HEK293 (cell line): ENCODE measurements at regions of chr15 and their contacts with region 1.

Region 1: DNA sequence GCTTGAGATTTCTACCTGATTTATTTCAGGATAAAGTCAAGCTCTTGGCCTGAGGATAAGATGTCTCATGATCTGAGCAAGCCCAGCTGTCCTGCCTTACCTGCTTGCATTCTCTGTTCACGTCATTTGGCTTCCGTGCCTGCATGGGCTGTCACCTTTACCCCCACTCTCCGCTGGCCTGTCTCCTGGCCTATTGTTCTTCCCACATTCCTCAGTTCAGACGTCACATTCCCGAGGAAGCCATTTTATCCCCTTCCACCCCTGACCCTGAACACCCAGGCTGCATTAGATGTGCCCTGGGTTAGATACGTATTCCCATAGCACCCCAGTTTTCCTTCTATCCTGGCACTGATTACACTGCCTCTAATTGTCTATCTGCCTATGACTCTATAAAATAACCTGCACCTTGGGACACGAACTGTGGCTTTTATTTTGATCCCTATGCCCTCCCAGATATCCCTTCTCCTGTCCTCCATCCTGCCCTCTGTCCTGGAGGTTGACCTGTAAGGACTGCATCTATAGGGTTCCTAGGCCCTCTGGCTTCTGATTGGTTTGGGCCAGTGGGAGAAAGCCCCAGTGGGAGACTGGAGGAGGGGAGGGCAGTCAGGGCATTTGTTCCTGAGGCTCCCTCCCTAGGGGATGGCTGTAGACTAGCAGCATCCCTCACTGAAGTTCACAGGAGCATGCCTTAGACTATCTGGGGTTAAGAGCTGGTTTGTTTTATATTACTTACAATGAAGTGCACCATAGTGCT is 19.2 kb upstream of the UBE2Q2 start:
- H3K4me3 ChIP-seq: no peak overlapping the region
- H3K27ac ChIP-seq: no peak overlapping the region
- H3K4me1 ChIP-seq: no peaks in the 10 kb centered on the region
- CTCF ChIP-seq: no peak

Region 2: DNA sequence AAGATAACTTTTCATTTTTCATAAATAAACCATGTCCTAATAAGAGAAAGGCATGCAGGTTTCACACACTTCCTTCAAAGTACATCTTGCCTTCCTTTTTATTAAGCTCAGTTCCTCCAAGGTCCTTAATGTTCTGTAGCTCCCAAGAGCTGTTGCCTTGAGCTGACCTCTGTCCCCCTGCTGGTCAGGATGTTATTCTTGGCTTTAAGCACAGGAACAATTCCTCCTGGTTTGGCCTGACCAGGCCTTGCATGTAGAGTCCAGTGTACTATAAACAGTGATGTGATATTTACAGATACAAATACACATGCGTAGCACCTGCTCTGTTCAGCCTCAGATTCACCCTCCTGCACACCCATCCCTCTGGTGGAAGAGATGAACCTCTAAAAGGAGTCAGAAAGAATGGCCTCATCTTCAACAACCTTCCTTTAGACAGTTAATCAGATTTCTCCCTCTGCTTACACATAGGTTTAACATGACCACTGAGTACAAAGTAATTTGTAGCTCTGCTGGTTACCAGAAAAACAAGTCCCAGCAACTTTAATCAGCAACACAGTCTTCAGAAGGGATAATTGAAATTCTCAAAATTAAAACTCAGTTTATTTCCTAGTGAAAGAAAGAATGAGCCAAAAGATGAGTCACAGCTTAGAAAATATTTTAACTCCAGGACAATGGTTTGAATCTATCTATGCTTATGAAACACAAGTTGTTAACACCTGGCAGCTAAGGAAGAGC is 291.5 kb before region 1 on chr15:
- CTCF ChIA-PET with region 1: no interaction called
- POLR2A ChIA-PET with region 1: no interaction called
- H3K4me3 ChIP-seq: no peak overlapping the region
- H3K27ac ChIP-seq: no peak overlapping the region
- H3K4me1 ChIP-seq: peaks cover 8% of the 10 kb centered on the region
- CTCF ChIP-seq: peak; percentile 65

Region 3: GRCh38 chr15:75597667-75598341 is 226.2 kb before region 1 on chr15:
- CTCF ChIA-PET with region 1: no interaction called
- POLR2A ChIA-PET with region 1: no interaction called
- H3K4me3 ChIP-seq: no peak overlapping the region
- H3K27ac ChIP-seq: no peak overlapping the region; the same call in 1 of the 2 replicates
- H3K4me1 ChIP-seq: no peaks in the 10 kb centered on the region
- CTCF ChIP-seq: no peak

Region 4: DNA sequence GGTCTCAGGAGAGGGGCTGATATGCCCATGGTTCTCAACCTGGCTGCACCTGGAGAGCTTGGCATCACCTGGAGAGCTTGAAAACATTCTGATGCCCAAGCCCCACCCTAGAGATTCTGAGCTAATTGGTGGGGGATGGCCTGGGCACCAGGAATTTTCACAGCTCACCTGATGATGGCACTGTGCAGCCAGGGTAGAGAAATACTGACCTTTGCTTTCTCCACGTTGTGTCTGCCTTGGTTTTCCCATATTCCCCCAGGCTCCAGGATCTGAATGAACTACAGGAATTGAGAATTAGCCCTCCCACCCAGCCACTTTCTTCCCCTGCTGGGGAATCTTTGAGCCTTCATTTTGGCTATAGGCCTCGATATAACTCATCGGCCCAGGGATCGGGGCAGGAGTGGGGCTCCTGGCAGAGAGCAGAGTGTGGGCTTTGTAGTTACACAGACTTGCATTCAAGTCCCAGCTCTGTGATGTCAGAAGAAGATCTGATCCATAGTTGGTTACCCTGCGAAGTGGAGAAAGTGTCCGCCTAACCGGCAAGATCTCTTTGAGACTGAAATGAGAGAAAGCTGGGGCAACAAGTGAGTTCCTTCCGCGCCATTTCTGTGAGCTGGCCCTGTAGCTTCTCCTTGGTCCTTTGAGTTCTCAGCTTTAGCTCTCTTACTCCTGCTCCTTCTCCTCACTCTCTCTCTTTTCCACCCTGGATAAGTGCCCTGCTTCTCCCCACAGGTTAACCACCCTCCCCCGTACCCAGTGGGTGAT is 13.9 kb before region 1 on chr15:
- CTCF ChIA-PET with region 1: interaction called, 22 read pairs
- POLR2A ChIA-PET with region 1: no interaction called
- H3K4me3 ChIP-seq: no peak overlapping the region
- H3K27ac ChIP-seq: no peak overlapping the region
- H3K4me1 ChIP-seq: no peaks in the 10 kb centered on the region
- CTCF ChIP-seq: peak; percentile 42; the same call in 1 of the 2 replicates